ENCODE measurements at regions of chr4 and their contacts with region 1.

Region 1: GRCh38 chr4:80184053-80184790 is 13.1 kb upstream of the PRDM8 start:
- DNase-seq: peak; percentile 93
- H3K4me3 Mint-ChIP-seq: peak overlapping the region; percentile 98
- H3K27ac Mint-ChIP-seq: peak overlapping the region; percentile 93
- H3K4me1 Mint-ChIP-seq: peaks cover 54% of the 10 kb centered on the region
- H3K27me3 Mint-ChIP-seq: peaks cover 39% of the 10 kb centered on the region

Region 2: DNA sequence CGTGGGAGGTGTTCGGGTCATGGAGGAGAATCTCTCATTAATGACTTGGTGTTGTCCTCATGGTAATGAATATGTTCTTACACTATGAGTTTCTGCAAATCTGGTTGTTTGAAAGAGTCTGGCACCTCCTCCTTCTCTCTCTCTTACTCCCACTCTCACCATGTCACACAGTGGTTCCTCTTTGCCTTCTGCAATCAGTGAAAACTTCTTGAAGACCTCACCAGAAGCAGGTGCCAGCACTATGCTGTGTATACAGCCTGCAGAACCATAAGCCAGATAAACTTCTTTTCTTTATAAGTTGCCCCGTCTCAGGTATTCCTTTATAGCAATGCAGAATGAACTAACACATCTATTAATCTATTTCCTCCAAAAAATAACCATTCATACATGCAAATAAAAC is 386.2 kb before region 1 on chr4:
- CTCF ChIA-PET with region 1: no interaction called
- DNase-seq: no peak
- H3K4me3 Mint-ChIP-seq: no peak overlapping the region
- H3K27ac Mint-ChIP-seq: no peak overlapping the region
- H3K4me1 Mint-ChIP-seq: no peaks in the 10 kb centered on the region
- H3K27me3 Mint-ChIP-seq: peaks cover 3% of the 10 kb centered on the region

Region 3: DNA sequence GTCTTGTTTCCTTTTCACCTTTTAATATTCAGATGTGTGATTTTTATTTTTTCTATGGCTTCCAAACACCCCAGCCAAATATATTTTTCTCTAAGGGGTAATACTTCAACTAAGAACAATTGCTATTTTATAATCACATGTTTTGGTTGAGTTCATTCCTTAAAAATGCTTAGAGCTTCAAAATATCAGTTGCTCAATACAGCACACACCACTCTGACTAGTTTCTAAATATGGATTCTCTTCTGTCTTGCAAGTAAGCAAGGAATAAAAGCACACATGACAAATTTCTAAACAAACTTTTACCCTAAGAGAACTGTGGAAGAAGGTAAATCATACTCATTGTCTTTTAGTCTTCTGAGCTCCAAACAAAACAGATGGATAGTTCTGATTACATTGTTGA is 138.4 kb before region 1 on chr4:
- CTCF ChIA-PET with region 1: no interaction called
- DNase-seq: no peak
- H3K4me3 Mint-ChIP-seq: no peak overlapping the region
- H3K27ac Mint-ChIP-seq: no peak overlapping the region
- H3K4me1 Mint-ChIP-seq: no peaks in the 10 kb centered on the region
- H3K27me3 Mint-ChIP-seq: no peaks in the 10 kb centered on the region

Region 4: DNA sequence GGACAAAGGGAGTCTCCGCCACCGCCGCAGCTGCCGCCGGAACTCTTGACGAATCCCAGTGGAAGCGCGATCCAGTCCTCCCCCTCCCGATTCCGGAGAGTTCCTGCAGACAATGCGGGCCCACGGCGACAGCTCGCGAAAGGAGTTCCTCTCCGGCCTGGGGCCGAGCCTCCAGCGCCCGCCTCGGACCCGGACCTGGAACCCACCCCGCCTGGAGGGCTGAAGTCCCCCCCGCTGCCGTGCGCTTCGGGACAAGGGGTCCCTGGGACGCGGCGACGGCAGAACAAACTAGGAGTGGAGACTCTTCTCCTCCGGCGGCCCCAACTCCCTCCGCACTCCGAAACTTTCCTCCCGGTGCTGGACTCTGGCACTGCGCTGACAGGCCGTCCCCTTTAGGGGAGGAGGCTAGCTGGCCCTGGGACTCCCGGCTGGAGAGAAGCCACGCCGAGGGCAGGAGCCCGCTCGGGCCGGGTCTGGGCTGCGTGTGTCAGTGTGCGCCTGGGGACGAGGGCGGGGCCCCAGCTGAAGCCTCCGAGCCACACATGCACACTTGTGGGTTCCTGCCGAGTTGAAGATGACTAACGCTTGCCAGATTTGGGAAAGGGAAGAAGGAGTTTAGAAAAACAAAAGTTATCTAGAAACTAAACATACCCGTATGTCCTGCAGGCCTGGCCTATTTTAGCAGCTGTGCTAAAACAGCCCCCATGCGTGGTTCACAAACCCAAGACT is 111.3 kb before region 1 on chr4 and contains the start of gene ANTXR2:
- CTCF ChIA-PET with region 1: interaction called, 22 read pairs
- DNase-seq: peak; percentile 80
- H3K4me3 Mint-ChIP-seq: peak within 1 kb of the TSS; percentile 99
- H3K27ac Mint-ChIP-seq: peak within 1 kb of the TSS; percentile 95
- H3K4me1 Mint-ChIP-seq: peaks cover 82% of the 10 kb centered on the region
- H3K27me3 Mint-ChIP-seq: no peaks in the 10 kb centered on the region

Region 5: GRCh38 chr4:80125252-80126177 is 58.7 kb before region 1 on chr4:
- CTCF ChIA-PET with region 1: interaction called, 138 read pairs
- DNase-seq: peak; percentile 54
- H3K4me3 Mint-ChIP-seq: peak overlapping the region; percentile 6
- H3K27ac Mint-ChIP-seq: peak overlapping the region; percentile 89
- H3K4me1 Mint-ChIP-seq: peaks cover 58% of the 10 kb centered on the region
- H3K27me3 Mint-ChIP-seq: no peaks in the 10 kb centered on the region

Region 6: GRCh38 chr4:80138551-80139538 is 45.4 kb before region 1 on chr4:
- CTCF ChIA-PET with region 1: interaction called, 52 read pairs
- DNase-seq: peak; percentile 73
- H3K4me3 Mint-ChIP-seq: no peak overlapping the region
- H3K27ac Mint-ChIP-seq: peak overlapping the region; percentile 88
- H3K4me1 Mint-ChIP-seq: peaks cover 54% of the 10 kb centered on the region
- H3K27me3 Mint-ChIP-seq: no peaks in the 10 kb centered on the region

Region 7: DNA sequence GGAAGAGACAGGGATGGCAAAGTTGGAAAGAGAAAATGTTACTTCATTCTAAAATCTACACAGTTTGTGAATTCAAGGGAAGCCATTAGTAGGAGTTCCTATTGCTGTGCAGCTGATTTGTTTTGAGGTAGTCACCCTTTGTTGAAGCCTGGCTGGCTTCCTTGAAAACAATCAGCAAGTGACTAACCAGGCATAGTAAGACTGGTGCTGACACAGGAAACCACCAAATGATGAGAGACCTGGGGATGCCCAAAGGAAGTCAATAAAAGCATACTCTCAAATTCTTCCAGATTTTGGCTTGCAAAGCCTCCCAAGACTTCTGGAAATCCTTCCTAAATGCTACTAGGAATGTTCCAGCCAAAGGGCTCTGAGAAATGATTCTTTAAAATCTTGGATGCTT is 10.8 kb before region 1 on chr4:
- CTCF ChIA-PET with region 1: interaction called, 68 read pairs
- DNase-seq: peak; percentile 67
- H3K4me3 Mint-ChIP-seq: peak overlapping the region; percentile 57
- H3K27ac Mint-ChIP-seq: peak overlapping the region; percentile 96
- H3K4me1 Mint-ChIP-seq: peaks cover 55% of the 10 kb centered on the region
- H3K27me3 Mint-ChIP-seq: no peaks in the 10 kb centered on the region

Region 8: GRCh38 chr4:80202190-80202711 is 18.0 kb after region 1 on chr4:
- CTCF ChIA-PET with region 1: interaction called, 76 read pairs
- DNase-seq: peak; percentile 83
- H3K4me3 Mint-ChIP-seq: peak overlapping the region; percentile 77
- H3K27ac Mint-ChIP-seq: peak overlapping the region; percentile 70
- H3K4me1 Mint-ChIP-seq: peaks cover 28% of the 10 kb centered on the region
- H3K27me3 Mint-ChIP-seq: peaks cover 50% of the 10 kb centered on the region

Measured in activated naive CD4-positive, alpha-beta T cell treated with anti-CD3 and anti-CD28 coated beads, Interleukin-2, amount 10 ng/mL, durations not matched to agents 7 days and 5 days (primary cell).